HepG2 (cell line): ENCODE measurements at regions of chr3 and their contacts with region 1.

Region 1: GRCh38 chr3:168025076-168025475 is 70.6 kb downstream of the GOLIM4 start:
- DNase-seq: no peak
- ATAC-seq: no peak
- H3K4me3 ChIP-seq: no peak overlapping the region
- H3K27ac ChIP-seq: no peak overlapping the region
- H3K4me1 ChIP-seq: no peaks in the 10 kb centered on the region
- H3K27me3 ChIP-seq: no peaks in the 10 kb centered on the region
- CTCF ChIP-seq: no peak
- EP300 ChIP-seq: no peak
- POLR2A ChIP-seq: no peak
- RAD21 ChIP-seq: no peak

Region 2: DNA sequence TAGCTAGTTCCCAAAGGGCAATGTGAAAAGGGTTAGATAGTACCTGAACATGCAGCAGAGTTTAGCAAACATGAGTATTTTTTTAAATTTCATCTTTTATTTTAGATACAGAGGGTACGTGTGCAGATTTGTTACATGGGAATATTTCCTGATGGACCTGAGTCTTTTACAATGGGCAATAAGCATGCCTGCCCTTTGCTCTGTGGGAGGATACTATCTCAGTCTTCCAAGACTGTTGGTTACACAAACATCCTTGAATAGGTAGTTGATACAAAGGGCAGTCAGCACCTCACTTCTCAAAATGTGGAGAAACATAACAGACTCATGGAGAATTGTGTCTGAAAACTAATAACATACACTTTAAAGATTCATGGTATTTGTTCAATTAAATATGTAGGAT is 32.7 kb before region 1 on chr3:
- CTCF ChIA-PET with region 1: no interaction called
- POLR2A ChIA-PET with region 1: no interaction called
- in situ Hi-C with region 1: no loop called
- intact Hi-C with region 1: loop called (anchors 1 kb)
- DNase-seq: no peak
- ATAC-seq: no peak
- H3K4me3 ChIP-seq: no peak overlapping the region
- H3K27ac ChIP-seq: no peak overlapping the region
- H3K4me1 ChIP-seq: no peaks in the 10 kb centered on the region
- H3K27me3 ChIP-seq: peaks cover 0 to 1% of the 10 kb centered on the region in 2 experiments; a peak in 1 of 5 replicates
- CTCF ChIP-seq: no peak
- EP300 ChIP-seq: no peak
- POLR2A ChIP-seq: no peak
- RAD21 ChIP-seq: no peak

Region 3: DNA sequence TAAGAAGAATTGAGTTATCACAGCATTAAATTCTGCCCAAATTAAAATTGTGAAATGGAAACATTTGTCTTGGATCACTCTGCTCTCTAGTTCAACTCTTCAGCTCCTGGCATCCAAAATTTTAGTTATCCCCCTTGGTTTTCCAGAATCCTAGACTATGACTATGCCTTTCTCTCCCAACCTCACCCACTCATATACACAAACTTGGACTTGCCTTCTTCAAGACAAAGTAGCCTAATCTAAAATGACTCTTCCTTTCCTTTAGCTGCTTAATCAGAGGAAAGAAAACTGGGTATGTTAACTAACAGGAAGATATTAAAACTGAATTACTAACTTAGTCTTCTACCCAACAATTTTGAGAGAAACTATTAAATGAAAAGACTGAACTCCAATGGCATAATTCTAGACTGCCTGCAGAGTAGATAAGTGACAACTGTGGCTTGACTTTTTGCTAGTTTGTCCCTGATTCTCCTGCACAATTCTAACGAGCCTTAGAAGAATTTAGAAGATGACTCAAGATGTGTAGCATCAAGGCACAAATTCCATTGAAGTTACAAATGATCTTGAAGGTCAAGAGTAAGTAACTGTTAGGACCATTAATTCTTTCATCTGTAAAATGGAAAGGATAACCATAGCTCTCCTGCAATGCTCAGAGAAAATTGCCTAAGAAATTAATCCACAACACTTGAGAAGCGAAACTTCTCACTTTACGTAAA is 75.9 kb after region 1 on chr3:
- CTCF ChIA-PET with region 1: no interaction called
- POLR2A ChIA-PET with region 1: no interaction called
- in situ Hi-C with region 1: no loop called
- intact Hi-C with region 1: no loop called
- DNase-seq: no peak
- ATAC-seq: no peak
- H3K4me3 ChIP-seq: no peak overlapping the region
- H3K27ac ChIP-seq: no peak overlapping the region
- H3K4me1 ChIP-seq: peaks cover 14% of the 10 kb centered on the region
- H3K27me3 ChIP-seq: no peaks in the 10 kb centered on the region
- CTCF ChIP-seq: no peak
- EP300 ChIP-seq: no peak
- POLR2A ChIP-seq: no peak
- RAD21 ChIP-seq: no peak